ENCODE measurements at regions of chr17 and their contacts with region 1.

Region 1: DNA sequence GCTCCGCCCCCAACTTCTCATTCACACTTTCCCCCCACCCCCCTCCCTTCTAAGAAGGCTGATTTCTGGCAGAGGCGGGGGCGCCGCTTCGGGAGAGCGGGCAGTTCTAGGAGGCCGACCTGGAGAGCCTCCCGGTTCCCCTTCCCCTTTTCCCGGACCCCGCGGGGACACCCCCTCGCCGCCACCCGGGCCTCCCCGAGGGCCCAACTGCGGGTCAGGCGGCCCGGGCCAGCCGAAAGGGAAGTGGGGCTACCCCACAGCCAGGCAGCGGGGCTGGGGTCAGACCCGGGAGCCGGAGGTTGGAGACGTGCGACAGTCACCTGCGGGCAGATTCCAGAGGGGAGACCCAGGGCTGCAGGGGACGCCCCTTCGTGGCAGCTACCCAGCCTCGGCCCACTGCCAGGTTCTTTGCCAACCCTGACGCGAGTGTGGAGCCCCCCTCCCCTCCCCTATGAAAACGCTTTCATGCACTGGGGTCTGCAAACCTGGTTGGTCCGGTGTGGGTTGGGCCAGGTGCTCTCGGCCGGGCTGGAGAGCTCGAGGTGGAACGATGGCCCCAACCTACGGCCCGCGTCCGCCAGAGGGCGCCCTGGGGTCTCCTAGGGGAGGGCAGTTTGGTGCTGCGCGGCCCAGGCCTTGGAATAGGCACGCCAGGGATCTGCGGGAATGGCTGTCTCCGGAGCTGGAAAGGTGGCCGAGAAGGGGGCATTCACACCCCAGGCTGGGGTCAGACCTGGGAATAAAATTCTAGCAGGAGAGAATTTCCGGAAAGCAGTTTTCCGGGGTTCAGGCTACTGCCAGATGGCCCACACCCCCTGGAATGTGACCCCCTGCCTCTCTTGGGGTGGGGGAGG is 721 bp upstream of the SOCS3 start:
- DNase-seq: peak; percentile 97
- ATAC-seq: peak; percentile 41
- H3K4me3 Mint-ChIP-seq: peak overlapping the region; percentile 74
- H3K27ac Mint-ChIP-seq: peak overlapping the region; percentile 90
- H3K4me1 Mint-ChIP-seq: peaks cover 42% of the 10 kb centered on the region
- H3K27me3 Mint-ChIP-seq: peaks cover 3% of the 10 kb centered on the region

Region 2: DNA sequence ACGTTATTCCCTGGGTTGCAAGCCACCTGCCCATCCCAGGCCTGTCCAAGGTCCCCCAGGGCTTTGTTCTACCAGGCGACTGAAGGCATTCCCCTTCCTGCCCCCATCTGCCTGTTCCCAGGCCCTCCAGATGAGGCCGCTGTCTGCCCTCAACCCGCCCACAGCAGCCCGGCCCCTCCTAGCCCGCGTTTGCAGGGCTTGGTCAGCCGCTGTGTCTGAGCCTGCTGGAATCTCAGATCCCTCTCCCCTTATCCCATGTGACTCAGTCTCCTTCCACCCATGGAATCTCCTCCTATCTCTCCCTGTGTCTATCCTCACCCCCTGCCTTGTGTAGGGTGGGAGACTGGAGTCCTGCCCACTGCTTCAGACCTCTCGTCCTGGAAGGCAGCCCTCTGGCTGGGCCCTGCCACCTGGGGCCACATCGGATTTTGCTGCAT is 588.1 kb before region 1 on chr17:
- CTCF ChIA-PET with region 1: no interaction called
- POLR2A ChIA-PET with region 1: no interaction called
- intact Hi-C with region 1: no loop called
- DNase-seq: peak; percentile 84
- ATAC-seq: peak; percentile 95
- H3K4me3 Mint-ChIP-seq: no peak overlapping the region
- H3K27ac Mint-ChIP-seq: no peak overlapping the region
- H3K4me1 Mint-ChIP-seq: peaks cover 9% of the 10 kb centered on the region
- H3K27me3 Mint-ChIP-seq: no peaks in the 10 kb centered on the region

Region 3: DNA sequence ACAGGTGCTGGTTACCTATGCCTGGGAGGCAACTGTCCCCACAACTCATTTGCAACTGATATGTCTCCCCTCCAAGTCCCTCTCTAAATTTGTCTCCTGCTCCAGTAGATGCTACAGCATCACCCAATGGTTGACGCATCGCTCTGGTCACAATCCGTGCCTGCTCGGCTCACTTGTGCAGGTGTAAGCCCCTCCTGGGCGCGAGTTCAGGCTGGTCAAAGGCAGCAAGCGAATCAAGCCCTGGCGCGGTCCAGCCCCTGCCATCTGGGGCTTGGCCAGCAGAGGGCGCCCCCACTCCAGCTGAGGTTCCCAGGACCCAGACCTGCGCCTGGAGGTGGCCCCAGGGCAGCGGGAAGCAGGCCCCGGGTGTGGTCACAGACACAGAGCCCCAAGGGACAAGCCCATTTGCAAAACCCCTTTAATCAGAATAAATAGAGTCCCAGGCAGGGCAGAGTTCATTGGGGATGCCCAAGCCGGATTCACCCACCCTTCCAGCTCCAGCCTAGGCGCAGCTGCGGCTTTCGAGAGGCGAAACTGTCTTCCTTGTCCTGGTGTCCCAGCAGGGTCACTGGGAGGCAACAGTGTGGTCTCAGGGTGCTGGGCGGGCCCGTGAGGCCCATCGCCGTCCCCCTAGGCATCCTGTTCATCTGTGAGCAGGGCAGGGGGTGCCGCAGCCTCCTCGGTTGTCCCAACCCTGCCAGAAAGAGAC is 247.9 kb before region 1 on chr17:
- CTCF ChIA-PET with region 1: no interaction called
- POLR2A ChIA-PET with region 1: no interaction called
- intact Hi-C with region 1: loop called in 1 of 2 experiments (anchors 5 kb)
- DNase-seq: peak; percentile 89
- ATAC-seq: peak; percentile 60
- H3K4me3 Mint-ChIP-seq: no peak overlapping the region
- H3K27ac Mint-ChIP-seq: peak overlapping the region; percentile 83
- H3K4me1 Mint-ChIP-seq: peaks cover 35% of the 10 kb centered on the region
- H3K27me3 Mint-ChIP-seq: no peaks in the 10 kb centered on the region

Region 4: DNA sequence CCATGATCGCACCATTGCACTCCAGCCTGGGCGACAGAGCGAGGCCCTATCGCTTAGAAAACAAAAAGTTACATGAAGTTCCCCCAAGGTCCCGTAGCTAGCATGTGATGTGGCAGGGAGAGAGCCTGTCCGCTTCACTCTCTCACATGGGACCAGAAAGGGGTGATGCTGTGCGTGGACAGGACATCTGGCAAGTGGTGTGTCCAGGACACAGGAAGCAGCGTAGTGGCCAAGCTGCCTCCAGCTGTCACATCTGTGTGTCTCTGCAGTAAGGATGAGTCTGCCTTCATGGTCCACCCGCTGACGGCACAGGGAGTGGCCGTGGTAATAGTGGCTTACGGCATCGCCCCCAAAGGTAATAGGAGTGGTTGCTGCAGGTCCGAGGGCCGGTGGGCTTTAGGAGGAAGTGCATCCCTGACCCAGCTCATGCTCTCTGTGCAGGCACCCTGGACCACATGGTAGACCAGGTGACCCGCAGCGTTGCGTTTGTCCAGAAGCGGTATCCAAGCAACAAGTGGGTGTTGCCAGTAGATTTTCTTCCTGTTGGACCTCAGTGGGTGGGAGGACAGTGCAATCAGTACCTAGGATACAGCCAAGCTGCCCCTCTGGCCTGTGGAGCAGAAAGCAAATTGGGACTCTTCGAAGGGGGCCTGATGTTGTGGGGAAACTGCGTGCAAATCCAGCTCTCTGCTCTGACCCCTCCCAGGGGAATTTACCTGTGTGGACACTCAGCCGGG is 156.0 kb before region 1 on chr17:
- CTCF ChIA-PET with region 1: no interaction called
- POLR2A ChIA-PET with region 1: no interaction called
- intact Hi-C with region 1: no loop called
- DNase-seq: no peak
- ATAC-seq: no peak
- H3K4me3 Mint-ChIP-seq: no peak overlapping the region
- H3K27ac Mint-ChIP-seq: no peak overlapping the region
- H3K4me1 Mint-ChIP-seq: no peaks in the 10 kb centered on the region
- H3K27me3 Mint-ChIP-seq: no peaks in the 10 kb centered on the region

Region 5: GRCh38 chr17:78214706-78215061 is 145.9 kb before region 1 on chr17:
- CTCF ChIA-PET with region 1: no interaction called
- POLR2A ChIA-PET with region 1: interaction called, 4 read pairs
- intact Hi-C with region 1: loop called in 1 of 2 experiments (anchors 1 kb)
- DNase-seq: no peak
- ATAC-seq: no peak
- H3K4me3 Mint-ChIP-seq: peak overlapping the region; percentile 89
- H3K27ac Mint-ChIP-seq: peak overlapping the region; percentile 78
- H3K4me1 Mint-ChIP-seq: peaks cover 5% of the 10 kb centered on the region
- H3K27me3 Mint-ChIP-seq: no peaks in the 10 kb centered on the region

Region 6: GRCh38 chr17:78313735-78314648 is 46.6 kb before region 1 on chr17:
- CTCF ChIA-PET with region 1: interaction called, 4 read pairs
- POLR2A ChIA-PET with region 1: interaction called, 6 read pairs
- intact Hi-C with region 1: loop called (anchors 1 to 2 kb)
- DNase-seq: peak; percentile 87
- ATAC-seq: peak; percentile 63
- H3K4me3 Mint-ChIP-seq: peak overlapping the region; percentile 52
- H3K27ac Mint-ChIP-seq: peak overlapping the region; percentile 74
- H3K4me1 Mint-ChIP-seq: peaks cover 49% of the 10 kb centered on the region
- H3K27me3 Mint-ChIP-seq: peaks cover 2% of the 10 kb centered on the region

Region 7: DNA sequence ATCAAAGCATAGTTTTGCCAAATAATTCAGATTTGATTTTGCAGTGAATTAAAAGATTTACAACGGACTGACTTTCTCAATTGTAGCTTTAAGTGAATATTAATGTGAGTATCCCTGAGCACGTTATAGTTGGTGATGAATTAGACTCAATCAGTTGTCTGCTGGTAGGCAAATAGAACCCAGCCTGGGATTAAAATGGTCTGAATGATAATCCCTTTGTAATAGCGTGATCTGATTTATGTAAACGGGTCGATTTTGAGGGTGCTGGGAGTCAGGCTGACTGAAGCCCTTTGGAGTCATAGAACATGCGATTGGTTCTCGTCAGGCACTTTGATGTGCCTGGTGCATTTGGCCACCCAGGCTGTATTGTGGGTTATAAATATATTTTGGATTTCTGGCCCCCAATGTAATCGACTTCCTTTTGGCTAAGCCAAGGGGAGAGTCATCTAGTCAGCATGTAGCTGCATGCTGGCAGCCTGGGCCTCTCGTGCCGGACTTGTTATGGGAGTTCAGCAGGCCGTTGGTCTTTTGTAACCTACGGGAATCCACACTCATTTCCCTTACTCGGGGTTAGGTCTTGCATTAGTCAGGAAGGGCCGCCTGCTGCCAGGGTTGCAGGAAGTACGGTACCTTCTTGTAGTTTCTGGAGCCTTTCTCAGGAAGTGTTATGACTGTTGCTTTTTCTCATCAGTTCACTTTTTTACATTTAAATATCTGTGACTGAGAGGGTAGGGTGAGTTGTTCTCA is 23.3 kb after region 1 on chr17:
- CTCF ChIA-PET with region 1: interaction called, 7 read pairs
- POLR2A ChIA-PET with region 1: interaction called, 64 read pairs
- intact Hi-C with region 1: loop called (anchors 1 kb)
- DNase-seq: peak; percentile 86
- ATAC-seq: peak; percentile 42
- H3K4me3 Mint-ChIP-seq: peak overlapping the region; percentile 88
- H3K27ac Mint-ChIP-seq: peak overlapping the region; percentile 98
- H3K4me1 Mint-ChIP-seq: peaks cover 89% of the 10 kb centered on the region
- H3K27me3 Mint-ChIP-seq: no peaks in the 10 kb centered on the region

Region 8: GRCh38 chr17:78774956-78775571 is 414.5 kb after region 1 on chr17:
- CTCF ChIA-PET with region 1: no interaction called
- POLR2A ChIA-PET with region 1: interaction called, 3 read pairs
- intact Hi-C with region 1: loop called in 1 of 2 experiments (anchors 2 kb)
- DNase-seq: peak; percentile 86
- ATAC-seq: peak; percentile 67
- H3K4me3 Mint-ChIP-seq: peak overlapping the region; percentile 84
- H3K27ac Mint-ChIP-seq: peak overlapping the region; percentile 100
- H3K4me1 Mint-ChIP-seq: peaks cover 68% of the 10 kb centered on the region
- H3K27me3 Mint-ChIP-seq: no peaks in the 10 kb centered on the region

Measured in activated CD4-positive, alpha-beta T cell treated with anti-CD3 and anti-CD28 coated beads for 36 hours (primary cell).